Heart left ventricle (tissue), 16 donors: ENCODE measurements at regions of chr9 and their contacts with region 1.

Region 1: DNA sequence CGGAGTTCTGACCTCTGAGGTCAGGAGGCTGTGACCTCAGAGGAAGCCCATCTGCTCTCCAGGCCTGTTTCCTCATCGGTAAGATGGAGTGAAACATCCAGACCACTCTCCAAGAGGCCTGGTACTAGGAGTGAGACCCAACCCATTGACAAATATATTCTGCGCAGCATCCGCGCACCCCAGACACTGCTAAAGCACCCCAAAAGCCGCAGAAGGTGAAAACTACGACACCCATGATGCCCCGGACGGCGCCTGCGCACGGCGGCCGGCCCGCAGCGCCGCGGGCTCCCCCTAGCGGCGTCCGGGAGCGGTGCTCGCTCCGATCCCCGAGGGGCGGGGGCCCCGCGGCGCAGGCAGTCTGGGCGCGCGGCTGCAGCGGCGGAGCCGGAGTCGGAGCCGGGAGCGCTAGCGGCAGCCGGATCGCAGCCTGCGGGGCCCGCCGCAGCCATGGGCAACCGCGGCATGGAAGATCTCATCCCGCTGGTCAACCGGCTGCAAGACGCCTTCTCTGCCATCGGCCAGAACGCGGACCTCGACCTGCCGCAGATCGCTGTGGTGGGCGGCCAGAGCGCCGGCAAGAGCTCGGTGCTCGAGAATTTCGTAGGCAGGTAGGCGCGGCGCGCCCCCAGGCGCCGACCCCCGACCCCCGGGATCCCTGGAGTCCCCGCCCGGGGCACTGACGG is at the start of gene DNM1:
- DNase-seq: peak in 4 of 5 donors; percentile 60 to 83 (median 72)
- ATAC-seq: peak; percentile 26 to 91 (median 80)
- H3K4me3 ChIP-seq: peak within 1 kb of the TSS; percentile 50 to 84 (median 69)
- H3K27ac ChIP-seq: peak within 1 kb of the TSS in 7 of 12 donors; percentile 28 to 62 (median 53)
- H3K4me1 ChIP-seq: peaks cover 0 to 19% (median 8%) of the 10 kb centered on the region in 12 donors
- H3K27me3 ChIP-seq: peaks cover 0 to 14% (median 6%) of the 10 kb centered on the region in 9 donors
- CTCF ChIP-seq: peak; percentile 52 to 100 (median 92)
- POLR2A ChIP-seq: peak in 1 of 2 donors; percentile 38
- total RNA-seq, gene DNM1: 1.6 to 17.2 (median 3.6) TPM

Region 2: DNA sequence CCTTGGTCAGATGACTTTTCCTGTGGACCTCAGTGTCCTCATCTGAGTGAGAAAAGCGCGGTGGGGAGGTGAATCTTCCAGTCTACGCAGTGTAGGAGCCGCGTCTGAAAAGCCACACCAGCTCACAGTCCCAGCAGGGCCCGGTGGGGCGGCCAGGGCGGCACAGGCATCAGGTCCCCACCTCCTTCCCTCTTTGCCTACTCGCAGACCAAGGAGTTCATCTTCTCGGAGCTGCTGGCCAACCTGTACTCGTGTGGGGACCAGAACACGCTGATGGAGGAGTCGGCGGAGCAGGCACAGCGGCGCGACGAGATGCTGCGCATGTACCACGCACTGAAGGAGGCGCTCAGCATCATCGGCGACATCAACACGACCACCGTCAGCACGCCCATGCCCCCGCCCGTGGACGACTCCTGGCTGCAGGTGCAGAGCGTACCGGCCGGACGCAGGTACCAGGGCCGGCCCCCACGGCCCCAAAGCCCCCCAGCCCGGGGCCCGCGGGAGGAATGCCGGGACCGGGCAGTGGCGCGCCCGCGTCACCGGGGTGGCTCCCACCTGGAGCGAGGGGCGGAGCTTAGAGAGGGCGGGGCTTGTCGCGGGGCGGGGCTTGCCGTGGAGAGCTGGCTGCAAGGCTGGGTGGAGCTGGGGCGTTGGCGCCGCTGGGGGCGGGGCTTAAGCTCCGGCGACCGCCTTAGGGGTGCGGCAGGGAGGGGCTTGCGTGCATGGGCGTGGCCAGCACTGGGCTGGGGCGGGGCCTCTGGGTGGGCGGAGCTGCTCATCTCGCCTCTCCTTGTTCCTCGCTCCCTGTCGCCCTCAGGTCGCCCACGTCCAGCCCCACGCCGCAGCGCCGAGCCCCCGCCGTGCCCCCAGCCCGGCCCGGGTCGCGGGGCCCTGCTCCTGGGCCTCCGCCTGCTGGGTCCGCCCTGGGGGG is 47.0 kb after region 1 on chr9:
- intact Hi-C with region 1: loop called in 1 of 10 experiments (anchors 10 kb)
- DNase-seq: peak; percentile 69 to 94 (median 76)
- ATAC-seq: peak; percentile 44 to 91 (median 82)
- H3K4me3 ChIP-seq: peak overlapping the region in 9 of 12 donors; percentile 8 to 54 (median 32)
- H3K27ac ChIP-seq: no peak overlapping the region
- H3K4me1 ChIP-seq: peaks cover 6 to 32% (median 21%) of the 10 kb centered on the region in 12 donors
- H3K27me3 ChIP-seq: peaks cover 0 to 10% (median 0%) of the 10 kb centered on the region in 9 donors
- CTCF ChIP-seq: no peak
- POLR2A ChIP-seq: no peak